ENCODE measurements at regions of chr1 and their contacts with region 1.

Region 1: GRCh38 chr1:12152113-12152891 is 14.5 kb upstream of the TNFRSF1B start:
- DNase-seq: peak in 2 of 3 donors; percentile 58 to 72
- H3K4me3 ChIP-seq: no peak overlapping the region
- H3K27ac ChIP-seq: no peak overlapping the region
- H3K4me1 ChIP-seq: peaks cover 33 to 76% (median 63%) of the 10 kb centered on the region in 4 experiments
- H3K27me3 ChIP-seq: no peaks in the 10 kb centered on the region

Region 2: DNA sequence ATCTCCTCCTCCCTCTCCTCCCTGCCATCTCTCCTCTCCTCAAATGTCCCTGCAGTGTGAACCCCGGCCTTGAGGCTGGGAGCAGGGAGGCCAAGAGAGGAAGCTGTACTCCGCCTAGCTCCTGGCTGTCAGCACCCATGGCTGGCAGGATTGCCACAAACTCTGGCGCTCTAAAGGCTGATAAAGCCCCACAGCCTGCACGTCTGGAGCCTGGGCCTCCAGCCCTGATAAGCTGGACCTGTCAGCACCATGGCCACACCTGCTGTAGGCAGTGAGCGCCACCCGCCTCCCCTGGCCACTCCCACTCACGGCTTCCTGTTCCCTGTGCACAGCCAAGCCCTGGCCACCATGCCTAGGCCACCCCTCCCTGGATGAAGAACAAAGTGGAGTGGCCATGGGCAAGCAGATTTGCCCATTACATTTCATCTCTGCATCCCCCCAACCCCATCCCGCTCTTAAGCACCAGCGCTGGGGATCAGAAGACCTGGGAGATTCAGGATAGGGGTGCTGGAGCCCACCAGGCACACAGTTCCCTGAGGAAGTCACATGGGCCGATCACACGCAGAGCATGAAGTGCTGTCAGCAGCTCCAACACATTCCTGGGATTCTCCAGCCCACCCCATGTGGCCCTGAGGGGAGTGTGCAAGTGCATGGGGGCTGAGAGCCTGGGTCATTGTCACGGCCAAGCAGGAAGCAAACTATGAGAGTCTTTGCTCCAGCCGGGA is 269.3 kb before region 1 on chr1:
- CTCF ChIA-PET with region 1: no interaction called
- POLR2A ChIA-PET with region 1: no interaction called
- DNase-seq: peak in 2 of 3 donors; percentile 40 to 59
- H3K4me3 ChIP-seq: no peak overlapping the region
- H3K27ac ChIP-seq: no peak overlapping the region
- H3K4me1 ChIP-seq: peaks cover 0 to 11% (median 8%) of the 10 kb centered on the region in 4 experiments
- H3K27me3 ChIP-seq: peaks cover 0 to 2% (median 0%) of the 10 kb centered on the region in 5 experiments

Region 3: GRCh38 chr1:12111741-12112140 is 40.6 kb before region 1 on chr1:
- CTCF ChIA-PET with region 1: no interaction called
- POLR2A ChIA-PET with region 1: no interaction called
- DNase-seq: no peak
- H3K4me3 ChIP-seq: no peak overlapping the region
- H3K27ac ChIP-seq: no peak overlapping the region
- H3K4me1 ChIP-seq: no peaks in the 10 kb centered on the region
- H3K27me3 ChIP-seq: no peaks in the 10 kb centered on the region

Region 4: DNA sequence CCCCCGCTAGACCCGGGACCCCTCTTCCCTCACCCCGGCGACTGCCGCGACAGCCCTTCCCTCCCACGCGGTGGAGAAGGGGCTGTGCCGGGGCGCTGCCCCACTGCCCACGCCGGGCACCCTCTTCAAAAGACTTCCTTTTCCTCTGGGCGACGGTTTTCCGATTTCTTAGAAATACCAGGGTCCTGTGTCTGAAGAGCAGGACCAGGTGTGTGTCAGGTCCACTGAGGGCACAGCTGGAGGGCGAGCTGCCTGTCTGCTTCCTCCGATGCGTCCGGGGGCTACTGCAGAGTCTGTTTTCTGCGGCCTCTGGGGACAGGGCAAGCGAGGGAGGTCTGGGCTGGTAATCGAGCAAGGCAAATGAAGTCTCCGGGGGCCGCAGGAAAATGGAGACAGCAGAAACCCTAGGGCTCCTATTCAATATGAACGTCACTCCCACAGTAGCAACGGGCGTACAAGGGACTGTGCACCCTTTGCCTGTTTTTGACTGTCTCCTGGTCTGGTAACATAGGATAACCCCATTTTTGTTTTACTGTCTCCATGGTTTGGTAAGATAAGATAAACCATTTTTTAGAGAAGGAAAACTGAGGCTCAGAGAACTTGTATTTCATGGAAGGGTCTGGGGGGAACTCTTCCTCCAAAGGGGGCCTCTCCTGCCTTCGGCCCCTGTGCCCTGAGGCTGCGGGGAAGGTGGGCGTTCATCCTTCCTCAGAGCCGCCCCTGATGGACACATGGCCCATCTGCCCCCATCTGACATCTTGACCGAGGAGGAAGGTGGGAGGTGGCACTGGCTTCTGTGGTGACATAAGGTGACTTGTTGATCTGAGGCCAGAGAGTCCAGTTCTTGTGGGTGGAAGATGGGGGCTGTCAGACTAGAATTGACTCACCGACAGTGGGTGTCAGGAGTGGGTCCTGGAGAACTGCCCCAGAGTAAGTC is 15.5 kb after region 1 on chr1:
- CTCF ChIA-PET with region 1: interaction called, 10 read pairs
- POLR2A ChIA-PET with region 1: no interaction called
- DNase-seq: peak in 1 of 3 donors; percentile 38
- H3K4me3 ChIP-seq: peak overlapping the region; percentile 46 to 79 (median 71)
- H3K27ac ChIP-seq: peak overlapping the region in 1 of 2 experiments; percentile 41
- H3K4me1 ChIP-seq: peaks cover 14 to 72% (median 39%) of the 10 kb centered on the region in 4 experiments
- H3K27me3 ChIP-seq: peaks cover 0 to 3% (median 3%) of the 10 kb centered on the region in 5 experiments

Region 5: GRCh38 chr1:12184008-12184681 is 31.8 kb after region 1 on chr1:
- CTCF ChIA-PET with region 1: interaction called, 10 read pairs
- POLR2A ChIA-PET with region 1: no interaction called
- DNase-seq: peak in 2 of 3 donors; percentile 87 to 88
- H3K4me3 ChIP-seq: peak overlapping the region in 2 of 7 experiments; percentile 8 to 21
- H3K27ac ChIP-seq: peak overlapping the region in 1 of 2 experiments; percentile 11
- H3K4me1 ChIP-seq: peaks cover 3 to 75% (median 39%) of the 10 kb centered on the region in 4 experiments
- H3K27me3 ChIP-seq: no peaks in the 10 kb centered on the region

Region 6: DNA sequence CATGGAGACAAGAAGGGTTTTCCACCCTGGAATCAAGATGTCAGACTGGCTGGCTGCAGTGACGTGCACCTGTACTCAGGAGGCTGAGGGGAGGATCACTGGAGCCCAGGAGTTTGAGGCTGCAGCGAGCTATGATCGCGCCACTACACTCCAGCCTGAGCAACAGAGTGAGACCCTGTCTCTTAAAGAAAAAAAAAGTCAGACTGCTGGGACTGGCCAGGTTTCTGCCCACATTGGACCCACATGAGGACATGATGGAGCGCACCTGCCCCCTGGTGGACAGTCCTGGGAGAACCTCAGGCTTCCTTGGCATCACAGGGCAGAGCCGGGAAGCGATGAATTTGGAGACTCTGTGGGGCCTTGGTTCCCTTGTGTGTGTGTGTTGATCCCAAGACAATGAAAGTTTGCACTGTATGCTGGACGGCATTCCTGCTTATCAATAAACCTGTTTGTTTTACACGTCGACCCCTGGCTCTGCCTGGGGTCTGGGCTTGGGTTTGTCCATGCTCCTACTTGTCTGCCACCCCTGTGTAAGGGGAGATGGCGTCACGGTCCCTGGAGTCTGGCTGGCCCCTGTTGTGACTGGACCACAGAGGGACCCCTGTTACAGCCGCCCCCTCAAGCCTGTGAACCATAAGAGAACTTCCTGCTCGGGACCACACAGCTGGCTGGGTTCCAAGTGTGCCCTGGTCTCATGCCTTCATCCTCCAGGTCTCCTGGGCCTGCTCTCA is 56.6 kb after region 1 on chr1:
- CTCF ChIA-PET with region 1: interaction called, 10 read pairs
- POLR2A ChIA-PET with region 1: no interaction called
- DNase-seq: peak; percentile 80 to 88 (median 82)
- H3K4me3 ChIP-seq: peak overlapping the region in 2 of 7 experiments; percentile 2 to 5
- H3K27ac ChIP-seq: no peak overlapping the region
- H3K4me1 ChIP-seq: peaks cover 7 to 32% (median 27%) of the 10 kb centered on the region in 4 experiments
- H3K27me3 ChIP-seq: no peaks in the 10 kb centered on the region